Prostate gland (tissue), 2 donors: ENCODE measurements at regions of chr19 and their contacts with region 1.

Region 1: GRCh38 chr19:16764793-16765433 is 45.3 kb downstream of the NWD1 start:
- DNase-seq: no peak
- H3K4me3 ChIP-seq: no peak overlapping the region
- H3K27ac ChIP-seq: no peak overlapping the region
- H3K4me1 ChIP-seq: no peaks in the 10 kb centered on the region
- H3K27me3 ChIP-seq: no peaks in the 10 kb centered on the region
- CTCF ChIP-seq: no peak
- POLR2A ChIP-seq: no peak

Region 2: DNA sequence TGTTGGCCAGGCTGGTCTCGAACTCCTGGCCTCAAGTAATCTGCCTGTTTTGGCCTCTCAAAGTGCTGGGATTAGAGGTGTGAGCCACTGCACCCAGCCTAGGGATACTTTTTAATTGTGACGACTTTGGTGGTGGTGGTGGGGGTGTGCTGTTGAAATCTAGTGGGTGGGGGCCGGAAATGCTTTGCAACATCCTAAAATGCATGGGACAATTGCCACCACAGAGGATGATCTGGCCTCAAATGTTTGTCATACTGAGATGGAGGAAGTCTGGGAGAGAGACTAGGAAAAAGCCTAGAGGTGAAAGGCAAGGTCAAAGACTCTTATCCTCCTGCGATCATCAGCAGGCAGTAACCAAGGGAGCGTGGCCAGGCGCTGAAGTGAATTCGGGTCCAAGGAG is 43.9 kb before region 1 on chr19:
- intact Hi-C with region 1: loop called (anchors 5 kb)
- DNase-seq: no peak
- H3K4me3 ChIP-seq: peak overlapping the region; percentile 12 to 23
- H3K27ac ChIP-seq: peak overlapping the region; percentile 82 to 85
- H3K4me1 ChIP-seq: no peaks in the 10 kb centered on the region
- H3K27me3 ChIP-seq: no peaks in the 10 kb centered on the region
- CTCF ChIP-seq: no peak
- POLR2A ChIP-seq: no peak

Region 3: GRCh38 chr19:16829010-16829821 is 64.3 kb after region 1 on chr19 and contains the start of gene SIN3B:
- intact Hi-C with region 1: no loop called
- DNase-seq: peak; percentile 80
- H3K4me3 ChIP-seq: peak within 1 kb of the TSS; percentile 63 to 99
- H3K27ac ChIP-seq: peak within 1 kb of the TSS; percentile 74 to 83
- H3K4me1 ChIP-seq: no peaks in the 10 kb centered on the region
- H3K27me3 ChIP-seq: no peaks in the 10 kb centered on the region
- CTCF ChIP-seq: peak in 1 of 4 experiments; percentile 13
- POLR2A ChIP-seq: peak; percentile 81
- total RNA-seq, gene SIN3B: 37.8 to 159 TPM